ENCODE measurements at regions of chr11 and their contacts with region 1.

Region 1: GRCh38 chr11:18243783-18244362 is 4.6 kb downstream of the SAA2 start:
- DNase-seq: peak; percentile 93
- H3K4me3 Mint-ChIP-seq: no peak overlapping the region
- H3K27ac Mint-ChIP-seq: no peak overlapping the region
- H3K4me1 Mint-ChIP-seq: peaks cover 26% of the 10 kb centered on the region
- H3K27me3 Mint-ChIP-seq: peaks cover 27% of the 10 kb centered on the region

Region 2: DNA sequence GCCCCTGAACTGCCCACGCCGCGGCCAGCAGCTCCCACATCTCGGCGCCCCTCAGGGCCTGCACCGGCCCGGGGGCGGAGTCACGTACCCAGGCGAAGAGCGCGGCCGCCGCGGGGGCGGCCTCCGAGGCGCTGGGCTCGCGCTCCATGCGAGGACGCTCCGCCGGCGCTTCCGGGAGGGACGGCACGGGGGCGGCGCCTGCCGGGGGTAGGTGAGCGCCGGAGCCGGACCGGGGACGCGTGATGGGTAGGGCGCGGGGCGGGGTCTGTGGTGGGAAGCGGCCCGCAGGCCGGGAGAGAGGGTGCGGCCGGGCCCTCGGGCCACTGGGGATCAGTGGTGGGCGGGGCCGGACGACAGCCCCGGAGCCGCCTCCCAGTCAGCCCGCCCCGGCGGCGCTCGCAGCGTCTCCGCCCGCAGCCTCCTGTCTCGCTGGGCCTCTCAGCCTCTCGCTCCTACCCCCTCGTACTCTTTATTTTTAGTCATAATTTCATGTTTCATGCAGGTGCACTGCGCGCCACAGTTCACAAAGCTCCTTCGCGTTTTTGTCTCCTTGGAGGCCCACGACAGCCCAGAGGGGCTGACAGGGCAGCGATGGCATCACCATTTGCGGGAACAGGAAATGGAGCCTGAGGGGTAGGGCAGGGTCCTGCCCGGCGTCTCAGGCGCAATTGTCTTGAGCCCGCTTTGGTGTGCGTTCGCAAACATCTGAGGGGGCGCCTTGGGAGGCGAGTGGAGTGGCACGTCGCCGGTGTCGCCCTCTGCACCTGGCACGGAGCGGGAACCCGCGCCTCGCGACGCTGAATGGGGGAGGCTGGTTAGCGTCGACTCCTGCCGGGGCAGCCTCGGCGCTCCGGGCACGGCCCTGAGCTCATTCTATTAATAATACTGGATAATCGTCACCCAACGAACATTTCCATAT is 230.8 kb before region 1 on chr11 and contains the start of gene SERGEF:
- intact Hi-C with region 1: loop called (anchors 1 kb)
- DNase-seq: peak; percentile 98
- H3K4me3 Mint-ChIP-seq: peak within 1 kb of the TSS; percentile 90
- H3K27ac Mint-ChIP-seq: peak within 1 kb of the TSS; percentile 92
- H3K4me1 Mint-ChIP-seq: peaks cover 37% of the 10 kb centered on the region
- H3K27me3 Mint-ChIP-seq: peaks cover 3% of the 10 kb centered on the region
- total RNA-seq, gene SERGEF: 26.2 and 35.8 TPM in 2 replicates

Region 3: GRCh38 chr11:18221274-18221876 is 22.5 kb before region 1 on chr11:
- intact Hi-C with region 1: no loop called
- DNase-seq: no peak
- H3K4me3 Mint-ChIP-seq: no peak overlapping the region
- H3K27ac Mint-ChIP-seq: no peak overlapping the region
- H3K4me1 Mint-ChIP-seq: no peaks in the 10 kb centered on the region
- H3K27me3 Mint-ChIP-seq: peaks cover 42% of the 10 kb centered on the region

Region 4: GRCh38 chr11:18395735-18396504 is 152.0 kb after region 1 on chr11:
- intact Hi-C with region 1: loop called (anchors 5 kb)
- DNase-seq: peak; percentile 99
- H3K4me3 Mint-ChIP-seq: peak overlapping the region; percentile 97
- H3K27ac Mint-ChIP-seq: peak overlapping the region; percentile 98
- H3K4me1 Mint-ChIP-seq: peaks cover 54% of the 10 kb centered on the region
- H3K27me3 Mint-ChIP-seq: no peaks in the 10 kb centered on the region

Region 5: GRCh38 chr11:18526521-18527296 is 282.8 kb after region 1 on chr11 and contains the start of gene TSG101:
- intact Hi-C with region 1: loop called (anchors 5 kb)
- DNase-seq: peak; percentile 98
- H3K4me3 Mint-ChIP-seq: peak within 1 kb of the TSS; percentile 99
- H3K27ac Mint-ChIP-seq: peak within 1 kb of the TSS; percentile 100
- H3K4me1 Mint-ChIP-seq: peaks cover 29% of the 10 kb centered on the region
- H3K27me3 Mint-ChIP-seq: no peaks in the 10 kb centered on the region
- total RNA-seq, gene TSG101: 39.6 and 43.5 TPM in 2 replicates

Region 6: DNA sequence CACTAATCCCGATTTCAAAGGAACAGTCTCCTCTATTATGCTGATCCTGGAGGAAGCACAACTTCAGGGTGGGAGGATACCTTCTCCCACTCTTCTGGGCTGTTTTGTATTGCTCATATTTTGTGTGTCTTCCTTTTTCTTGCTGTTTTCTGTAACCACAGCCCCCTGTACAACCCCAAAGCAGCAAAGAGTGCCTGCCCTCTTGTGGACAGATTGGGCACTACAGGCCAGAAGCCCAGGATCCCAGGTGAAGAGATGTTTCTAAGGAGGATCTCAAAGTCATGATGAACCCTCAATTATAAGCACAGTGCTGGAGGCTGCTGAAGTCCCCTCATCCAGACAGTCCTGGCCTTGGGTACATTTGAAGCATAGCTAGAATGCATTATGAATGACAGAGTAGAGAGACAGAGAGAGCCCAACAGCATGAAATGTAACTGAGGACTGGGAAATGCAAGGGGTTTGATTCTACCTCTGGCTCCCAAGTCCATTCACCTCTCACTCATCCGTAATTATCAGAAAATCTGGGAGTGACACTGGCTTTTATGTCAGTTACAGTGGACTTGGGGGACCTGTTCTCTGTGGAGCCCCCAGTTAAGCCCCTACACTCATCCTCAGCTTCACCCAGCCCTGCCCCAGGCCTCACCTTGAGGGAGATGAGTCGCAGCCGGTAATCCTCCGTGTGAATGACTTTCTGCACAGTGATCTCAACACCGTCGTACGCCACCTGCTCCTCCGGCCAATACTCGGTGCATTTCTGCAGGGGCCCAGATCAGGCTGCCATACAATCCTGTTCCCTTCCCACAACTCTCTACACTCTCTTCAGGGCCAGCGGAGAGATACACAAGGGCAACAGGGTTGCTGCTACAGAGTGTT is 488.3 kb after region 1 on chr11:
- intact Hi-C with region 1: loop called (anchors 10 kb)
- DNase-seq: peak; percentile 90
- H3K4me3 Mint-ChIP-seq: no peak overlapping the region
- H3K27ac Mint-ChIP-seq: no peak overlapping the region
- H3K4me1 Mint-ChIP-seq: peaks cover 3% of the 10 kb centered on the region
- H3K27me3 Mint-ChIP-seq: peaks cover 4% of the 10 kb centered on the region

Region 7: GRCh38 chr11:18768472-18768901 is 524.6 kb after region 1 on chr11:
- intact Hi-C with region 1: loop called (anchors 10 kb)
- DNase-seq: no peak
- H3K4me3 Mint-ChIP-seq: no peak overlapping the region
- H3K27ac Mint-ChIP-seq: no peak overlapping the region
- H3K4me1 Mint-ChIP-seq: peaks cover 22% of the 10 kb centered on the region
- H3K27me3 Mint-ChIP-seq: peaks cover 7% of the 10 kb centered on the region

Measured in activated CD4-positive, alpha-beta T cell treated with anti-CD3 and anti-CD28 coated beads, Interleukin-2, amount 10 ng/mL, durations not matched to agents 24 days and 14 days (primary cell).